Upper lobe of right lung (tissue), 1 donor: ENCODE measurements at regions of chr10 and their contacts with region 1.

Region 1: DNA sequence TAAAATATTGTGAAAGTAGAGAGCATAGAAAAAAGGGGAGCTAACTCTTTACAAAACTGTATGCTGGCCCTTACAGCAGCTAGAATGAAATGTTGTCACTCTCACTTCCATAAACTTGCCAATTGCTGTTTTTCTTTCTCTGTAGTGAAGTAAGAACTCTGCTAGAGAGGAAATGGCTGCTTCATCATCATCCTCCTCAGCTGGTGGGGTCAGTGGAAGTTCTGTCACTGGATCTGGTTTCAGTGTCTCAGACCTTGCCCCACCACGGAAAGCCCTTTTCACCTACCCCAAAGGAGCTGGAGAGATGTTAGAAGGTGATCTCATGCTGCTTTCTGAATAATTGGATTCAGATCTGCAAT is 7.6 kb upstream of the ASCC1 start:
- DNase-seq: no peak
- ATAC-seq: peak; percentile 71
- H3K4me3 ChIP-seq: no peak overlapping the region
- H3K27ac ChIP-seq: peak overlapping the region; percentile 78
- H3K4me1 ChIP-seq: peaks cover 30% of the 10 kb centered on the region
- H3K27me3 ChIP-seq: no peaks in the 10 kb centered on the region
- CTCF ChIP-seq: no peak

Region 2: GRCh38 chr10:72319416-72320254 is 95.9 kb after region 1 on chr10:
- intact Hi-C with region 1: loop called (anchors 10 kb)
- DNase-seq: peak; percentile 98
- ATAC-seq: peak; percentile 87
- H3K4me3 ChIP-seq: peak overlapping the region; percentile 44
- H3K27ac ChIP-seq: peak overlapping the region; percentile 89
- H3K4me1 ChIP-seq: peaks cover 79% of the 10 kb centered on the region
- H3K27me3 ChIP-seq: no peaks in the 10 kb centered on the region
- CTCF ChIP-seq: no peak